Panc1 (cell line): ENCODE measurements at regions of chr11 and their contacts with region 1.

Region 1: DNA sequence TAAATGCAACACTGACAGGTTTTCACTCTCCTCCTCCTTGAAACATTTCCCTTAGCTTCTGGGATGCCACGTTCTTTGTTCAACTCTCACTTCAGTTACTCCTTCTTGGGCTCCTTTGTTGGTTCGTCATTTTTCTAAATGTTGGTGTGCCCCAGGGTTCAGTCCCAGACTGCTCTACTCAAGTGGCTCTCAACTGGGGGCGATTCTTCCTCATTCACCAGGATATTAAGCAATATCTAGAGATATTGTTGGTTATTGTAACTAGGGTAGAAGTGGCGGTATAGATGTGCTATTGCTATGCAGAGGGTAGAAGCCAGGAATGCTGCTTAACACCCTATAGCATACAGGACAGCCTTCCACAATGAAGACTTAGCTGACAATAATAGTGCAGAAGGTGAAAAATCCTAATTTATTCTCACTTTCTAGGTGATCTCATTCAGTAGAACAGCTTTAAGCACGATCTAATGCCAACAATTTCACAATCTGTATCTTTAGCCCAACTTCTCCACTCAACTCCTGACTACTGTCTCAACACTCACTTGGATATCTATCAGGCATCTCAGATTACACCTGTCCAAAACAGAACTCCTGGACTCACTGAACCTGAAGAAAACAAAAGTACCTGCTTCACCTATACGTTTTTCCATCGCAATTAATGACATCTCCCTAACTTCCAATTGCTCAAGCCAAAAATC is 4.6 kb downstream of the NUP160 start:
- DNase-seq: no peak
- ATAC-seq: no peak
- H3K4me3 ChIP-seq: no peak overlapping the region
- H3K27ac ChIP-seq: no peak overlapping the region
- H3K4me1 ChIP-seq: peaks cover 8% of the 10 kb centered on the region
- H3K27me3 ChIP-seq: no peaks in the 10 kb centered on the region
- CTCF ChIP-seq: no peak

Region 2: GRCh38 chr11:47797633-47798032 is 45.9 kb before region 1 on chr11:
- CTCF ChIA-PET with region 1: no interaction called
- POLR2A ChIA-PET with region 1: interaction called, 18 read pairs
- in situ Hi-C with region 1: no loop called
- intact Hi-C with region 1: no loop called
- DNase-seq: peak; percentile 17
- ATAC-seq: no peak; the same call in 1 of the 2 replicates
- H3K4me3 ChIP-seq: no peak overlapping the region
- H3K27ac ChIP-seq: no peak overlapping the region
- H3K4me1 ChIP-seq: no peaks in the 10 kb centered on the region
- H3K27me3 ChIP-seq: no peaks in the 10 kb centered on the region
- CTCF ChIP-seq: no peak

Region 3: GRCh38 chr11:47908221-47908620 is 64.7 kb after region 1 on chr11:
- CTCF ChIA-PET with region 1: interaction called, 15 read pairs
- POLR2A ChIA-PET with region 1: no interaction called
- in situ Hi-C with region 1: no loop called
- intact Hi-C with region 1: no loop called
- DNase-seq: no peak
- ATAC-seq: no peak
- H3K4me3 ChIP-seq: no peak overlapping the region
- H3K27ac ChIP-seq: peak overlapping the region; percentile 29; the same call in 1 of the 2 replicates
- H3K4me1 ChIP-seq: 0 out of 2 replicates have a peak, but pooled peaks cover 3% of the 10 kb centered on the region
- H3K27me3 ChIP-seq: no peaks in the 10 kb centered on the region
- CTCF ChIP-seq: no peak